CD8-positive, alpha-beta T cell (primary cell): ENCODE measurements at regions of chr11 and their contacts with region 1.

Region 1: DNA sequence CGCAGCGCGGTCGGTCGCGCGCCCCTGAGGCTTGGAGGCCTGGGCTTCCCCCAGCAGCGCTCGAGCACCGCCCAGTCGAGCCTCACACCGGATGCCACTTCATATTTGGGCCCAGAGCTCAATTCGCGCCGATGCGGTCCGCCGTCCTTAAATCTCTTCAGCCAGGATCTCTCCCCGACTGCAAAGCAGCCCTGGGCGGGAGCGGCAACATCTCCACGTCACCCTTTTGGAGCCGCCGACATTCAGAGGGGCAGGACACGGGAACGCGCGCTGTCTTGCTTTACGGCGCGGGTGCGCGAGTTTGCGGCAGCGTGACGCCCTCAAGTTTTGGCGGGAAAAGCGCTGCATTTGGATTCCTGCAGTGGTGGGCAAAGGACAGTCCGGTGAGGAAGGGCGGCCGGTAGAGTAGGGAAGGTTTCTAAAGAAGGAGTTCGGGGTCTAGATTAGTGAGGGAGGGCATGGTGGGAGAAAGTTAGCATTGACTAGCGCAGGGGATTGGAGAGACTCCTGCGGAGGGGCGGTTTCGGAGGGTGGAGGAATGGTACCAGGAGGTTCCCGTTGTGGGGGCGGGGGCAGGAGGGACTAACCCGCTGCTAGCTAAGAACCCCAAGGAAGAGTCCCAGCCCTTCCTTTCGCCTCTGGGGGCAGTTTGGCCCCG is 796 bp downstream of the CHEK1 start:
- DNase-seq: peak; percentile 62 to 90 (median 81)
- ATAC-seq: peak; percentile 91
- H3K4me3 ChIP-seq: peak overlapping the region; percentile 77 to 91
- H3K4me3 Mint-ChIP-seq: peak overlapping the region; percentile 100
- H3K27ac ChIP-seq: peak overlapping the region; percentile 91 to 97
- H3K27ac Mint-ChIP-seq: peak overlapping the region; percentile 97
- H3K4me1 ChIP-seq: peaks cover 12% of the 10 kb centered on the region
- H3K4me1 Mint-ChIP-seq: peaks cover 17% of the 10 kb centered on the region
- H3K27me3 ChIP-seq: no peaks in the 10 kb centered on the region
- H3K27me3 Mint-ChIP-seq: no peaks in the 10 kb centered on the region
- CTCF ChIP-seq: peak; percentile 7

Region 2: DNA sequence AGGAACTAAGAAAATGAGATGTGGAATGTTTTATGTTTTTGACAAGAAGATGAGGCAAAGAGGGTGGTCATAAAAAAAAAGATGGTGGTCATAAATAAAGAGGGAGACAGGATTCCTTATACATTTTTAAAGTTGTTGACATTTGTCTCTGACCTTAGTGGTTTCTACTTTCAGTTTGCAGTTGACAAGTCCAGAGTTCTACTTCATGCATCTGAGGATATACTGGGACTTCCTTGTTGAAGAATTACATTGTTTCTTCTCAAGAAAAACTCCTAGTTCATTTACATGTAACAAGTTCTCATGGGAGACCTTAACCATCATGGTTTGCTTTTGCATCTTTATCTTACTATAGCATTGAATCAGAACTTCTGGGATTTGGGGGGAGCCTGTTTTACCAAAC is 1872.6 kb before region 1 on chr11:
- CTCF ChIA-PET with region 1: no interaction called
- POLR2A ChIA-PET with region 1: no interaction called
- intact Hi-C with region 1: loop called in 1 of 2 experiments (anchors 5 kb)
- DNase-seq: no peak
- ATAC-seq: no peak
- H3K4me3 ChIP-seq: no peak overlapping the region
- H3K4me3 Mint-ChIP-seq: no peak overlapping the region
- H3K27ac ChIP-seq: no peak overlapping the region
- H3K27ac Mint-ChIP-seq: no peak overlapping the region
- H3K4me1 ChIP-seq: no peaks in the 10 kb centered on the region
- H3K4me1 Mint-ChIP-seq: no peaks in the 10 kb centered on the region
- H3K27me3 ChIP-seq: no peaks in the 10 kb centered on the region
- H3K27me3 Mint-ChIP-seq: peaks cover 36% of the 10 kb centered on the region
- CTCF ChIP-seq: no peak

Region 3: GRCh38 chr11:125568970-125569914 is 56.5 kb before region 1 on chr11 and contains the start of gene EI24:
- CTCF ChIA-PET with region 1: interaction called, 4 read pairs
- POLR2A ChIA-PET with region 1: interaction called, 9 read pairs
- intact Hi-C with region 1: loop called (anchors 1 to 2 kb)
- DNase-seq: peak; percentile 71 to 95 (median 86)
- ATAC-seq: peak; percentile 95
- H3K4me3 ChIP-seq: peak within 1 kb of the TSS; percentile 81 to 92
- H3K4me3 Mint-ChIP-seq: peak within 1 kb of the TSS; percentile 93
- H3K27ac ChIP-seq: peak within 1 kb of the TSS; percentile 80 to 82
- H3K27ac Mint-ChIP-seq: peak within 1 kb of the TSS; percentile 95
- H3K4me1 ChIP-seq: peaks cover 16% of the 10 kb centered on the region
- H3K4me1 Mint-ChIP-seq: peaks cover 37% of the 10 kb centered on the region
- H3K27me3 ChIP-seq: no peaks in the 10 kb centered on the region
- H3K27me3 Mint-ChIP-seq: no peaks in the 10 kb centered on the region
- CTCF ChIP-seq: peak; percentile 60
- total RNA-seq, gene EI24: 20.5 to 22.4 TPM

Region 4: GRCh38 chr11:125869521-125869920 is 243.8 kb after region 1 on chr11:
- CTCF ChIA-PET with region 1: no interaction called
- POLR2A ChIA-PET with region 1: no interaction called
- intact Hi-C with region 1: loop called in 1 of 2 experiments (anchors 1 kb)
- DNase-seq: no peak
- ATAC-seq: no peak
- H3K4me3 ChIP-seq: no peak overlapping the region
- H3K4me3 Mint-ChIP-seq: no peak overlapping the region
- H3K27ac ChIP-seq: no peak overlapping the region
- H3K27ac Mint-ChIP-seq: no peak overlapping the region
- H3K4me1 ChIP-seq: no peaks in the 10 kb centered on the region
- H3K4me1 Mint-ChIP-seq: no peaks in the 10 kb centered on the region
- H3K27me3 ChIP-seq: no peaks in the 10 kb centered on the region
- H3K27me3 Mint-ChIP-seq: peaks cover 7% of the 10 kb centered on the region
- CTCF ChIP-seq: no peak

Region 5: GRCh38 chr11:125887373-125888324 is 261.9 kb after region 1 on chr11 and contains the start of gene HYLS1:
- CTCF ChIA-PET with region 1: interaction called, 3 read pairs
- POLR2A ChIA-PET with region 1: no interaction called
- intact Hi-C with region 1: loop called (anchors 1 to 5 kb)
- DNase-seq: peak; percentile 87 to 97 (median 94)
- ATAC-seq: peak; percentile 88
- H3K4me3 ChIP-seq: peak within 1 kb of the TSS; percentile 81 to 84
- H3K4me3 Mint-ChIP-seq: peak within 1 kb of the TSS; percentile 88
- H3K27ac ChIP-seq: peak within 1 kb of the TSS; percentile 61 to 87
- H3K27ac Mint-ChIP-seq: peak within 1 kb of the TSS; percentile 87
- H3K4me1 ChIP-seq: peaks cover 10% of the 10 kb centered on the region
- H3K4me1 Mint-ChIP-seq: peaks cover 31% of the 10 kb centered on the region
- H3K27me3 ChIP-seq: no peaks in the 10 kb centered on the region
- H3K27me3 Mint-ChIP-seq: no peaks in the 10 kb centered on the region
- CTCF ChIP-seq: no peak
- total RNA-seq, gene HYLS1: 1.1 to 1.2 TPM

Region 6: GRCh38 chr11:126062679-126063506 is 437.1 kb after region 1 on chr11 and contains the start of gene CDON:
- CTCF ChIA-PET with region 1: no interaction called
- POLR2A ChIA-PET with region 1: no interaction called
- intact Hi-C with region 1: loop called (anchors 1 to 5 kb)
- DNase-seq: peak; percentile 78 to 95 (median 89)
- ATAC-seq: peak; percentile 89
- H3K4me3 ChIP-seq: peak within 1 kb of the TSS; percentile 60 to 91
- H3K4me3 Mint-ChIP-seq: peak within 1 kb of the TSS; percentile 91
- H3K27ac ChIP-seq: peak within 1 kb of the TSS; percentile 80 to 90
- H3K27ac Mint-ChIP-seq: peak within 1 kb of the TSS; percentile 95
- H3K4me1 ChIP-seq: peaks cover 13% of the 10 kb centered on the region
- H3K4me1 Mint-ChIP-seq: peaks cover 13% of the 10 kb centered on the region
- H3K27me3 ChIP-seq: no peaks in the 10 kb centered on the region
- H3K27me3 Mint-ChIP-seq: peaks cover 4% of the 10 kb centered on the region
- CTCF ChIP-seq: no peak
- total RNA-seq, gene CDON: 1.00 to 1.1 TPM

Region 7: DNA sequence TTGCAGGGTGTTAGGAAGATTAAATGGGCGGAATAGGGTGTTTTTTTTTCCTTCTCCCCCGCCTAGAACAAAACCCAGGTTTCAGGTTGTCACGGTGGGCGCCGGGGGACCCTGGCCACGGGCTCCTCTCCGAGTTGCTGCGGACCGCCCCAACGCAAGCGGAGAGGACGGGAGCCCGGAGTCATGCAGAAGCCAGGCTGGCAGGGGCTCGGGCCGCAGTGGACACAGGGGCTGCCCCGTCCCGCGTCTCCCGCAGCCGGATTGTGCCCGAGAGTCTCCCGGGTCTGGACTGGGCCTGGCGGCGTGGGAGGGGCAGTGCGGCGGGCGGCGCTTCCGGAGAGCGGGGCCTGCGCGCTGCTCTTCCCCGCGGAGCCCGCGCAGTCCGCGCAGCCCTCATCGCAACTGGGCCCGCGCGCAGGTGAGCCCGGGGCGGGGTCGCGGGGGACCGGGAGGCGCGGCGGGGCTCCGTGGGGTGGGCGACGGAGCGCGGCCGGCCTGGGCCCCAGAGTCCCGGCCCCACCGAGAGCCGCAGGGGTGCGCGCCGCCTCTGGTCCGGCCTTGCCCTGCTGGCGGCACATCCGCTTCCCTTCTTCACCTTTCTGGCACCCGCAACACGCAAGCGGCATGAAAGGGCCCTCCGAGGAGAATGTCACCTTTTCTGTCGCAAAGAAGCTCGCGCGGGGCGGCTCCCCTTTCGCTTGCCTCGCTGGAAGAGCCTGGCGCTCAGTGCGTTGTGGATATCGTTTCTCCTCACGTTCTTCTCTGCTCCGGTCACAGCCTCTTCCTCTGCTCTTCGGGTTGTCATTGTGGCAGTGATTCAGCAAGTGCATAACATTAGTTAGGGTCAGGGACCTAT is 657.2 kb after region 1 on chr11 and contains the start of gene TIRAP:
- CTCF ChIA-PET with region 1: no interaction called
- POLR2A ChIA-PET with region 1: no interaction called
- intact Hi-C with region 1: loop called in 1 of 2 experiments (anchors 2 kb)
- DNase-seq: peak; percentile 28 to 83 (median 65)
- ATAC-seq: peak; percentile 60
- H3K4me3 ChIP-seq: peak within 1 kb of the TSS; percentile 88 to 99
- H3K4me3 Mint-ChIP-seq: peak within 1 kb of the TSS; percentile 88
- H3K27ac ChIP-seq: peak within 1 kb of the TSS; percentile 78 to 87
- H3K27ac Mint-ChIP-seq: peak within 1 kb of the TSS; percentile 98
- H3K4me1 ChIP-seq: peaks cover 34% of the 10 kb centered on the region
- H3K4me1 Mint-ChIP-seq: peaks cover 48% of the 10 kb centered on the region
- H3K27me3 ChIP-seq: no peaks in the 10 kb centered on the region
- H3K27me3 Mint-ChIP-seq: no peaks in the 10 kb centered on the region
- CTCF ChIP-seq: no peak
- total RNA-seq, gene TIRAP: 6.7 to 7.9 TPM